Activated T-helper 1 cell treated with anti-CD3 and anti-CD28 coated beads, Interleukin-12 subunit alpha, Interleukin-12 subunit beta, Interleukin-2, Interleukin-4 antibody, amounts not matched to agents 30 ng/mL and 10 ng/mL and 1 ng/mL, durations not matched to agents 14 hours and 24 hours and 36 hours (primary cell): ENCODE measurements at regions of chr9 and their contacts with region 1.

Region 1: DNA sequence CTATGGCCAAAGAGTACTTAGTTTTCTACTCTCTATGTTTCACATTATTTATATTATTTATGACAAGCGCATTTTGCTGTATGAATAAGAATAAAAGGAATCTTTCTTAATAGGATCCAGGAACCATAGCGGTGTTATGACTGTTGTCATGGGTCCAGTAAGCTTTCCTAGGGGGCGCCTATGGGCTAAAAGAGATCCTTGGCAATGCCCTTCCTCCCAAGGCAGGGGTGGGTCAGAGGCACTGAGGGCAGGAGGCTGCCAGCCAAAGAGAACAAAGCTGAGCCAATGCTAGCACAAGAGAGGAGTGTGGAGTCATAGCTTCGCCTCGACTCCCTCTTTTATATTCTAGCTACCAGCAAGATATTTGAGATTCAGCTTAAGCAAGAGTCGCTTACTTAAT is 98.4 kb upstream of the GNAQ start:
- DNase-seq: no peak
- H3K4me3 Mint-ChIP-seq: no peak overlapping the region
- H3K27ac Mint-ChIP-seq: no peak overlapping the region
- H3K4me1 Mint-ChIP-seq: peaks cover 17% of the 10 kb centered on the region
- H3K27me3 Mint-ChIP-seq: peaks cover 8% of the 10 kb centered on the region

Region 2: DNA sequence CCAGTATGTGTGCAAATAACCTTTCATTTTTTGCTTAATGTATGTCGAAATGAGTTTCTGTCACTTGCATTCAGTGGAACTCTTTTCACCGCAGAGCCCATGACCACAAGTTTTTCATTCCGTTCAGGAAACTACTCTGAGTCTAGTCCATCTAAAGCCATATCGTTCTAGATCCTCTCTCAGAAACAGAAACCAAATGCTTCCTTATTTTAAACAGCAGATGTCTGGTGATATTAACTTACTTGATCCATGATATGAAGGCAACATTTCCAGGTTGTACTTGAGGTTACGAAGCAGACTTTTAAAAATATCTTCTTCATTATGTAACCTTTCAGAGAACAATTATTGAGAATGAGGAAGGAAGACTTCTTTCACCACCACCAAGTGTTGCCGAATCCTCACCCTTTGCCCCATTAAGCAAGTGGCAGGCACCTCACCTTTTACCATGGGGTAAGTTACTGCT is 26.0 kb before region 1 on chr9:
- intact Hi-C with region 1: loop called (anchors 1 kb)
- DNase-seq: peak; percentile 45
- H3K4me3 Mint-ChIP-seq: peak overlapping the region; percentile 11
- H3K27ac Mint-ChIP-seq: peak overlapping the region; percentile 25
- H3K4me1 Mint-ChIP-seq: peaks cover 45% of the 10 kb centered on the region
- H3K27me3 Mint-ChIP-seq: peaks cover 2% of the 10 kb centered on the region

Region 3: DNA sequence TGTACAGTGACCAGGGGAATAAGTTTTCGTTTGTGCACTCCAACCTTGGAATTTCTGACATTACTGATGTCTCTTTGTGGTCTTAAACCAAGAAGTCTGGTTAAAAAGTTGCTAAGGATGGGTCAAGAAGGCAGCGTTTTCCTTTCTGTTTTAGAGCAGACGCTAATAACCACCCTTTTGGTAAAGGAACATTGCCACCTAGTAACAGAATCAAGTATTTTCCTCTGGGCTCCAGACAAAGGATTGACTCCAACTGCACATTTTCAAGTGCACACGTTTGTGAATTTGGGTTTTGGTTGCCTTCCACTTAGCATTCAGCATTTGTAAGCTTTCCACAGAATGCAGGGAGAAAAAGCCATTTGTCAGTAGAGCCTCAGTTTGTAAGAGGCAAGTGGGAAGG is 83.7 kb after region 1 on chr9:
- intact Hi-C with region 1: loop called (anchors 5 kb)
- DNase-seq: no peak
- H3K4me3 Mint-ChIP-seq: no peak overlapping the region
- H3K27ac Mint-ChIP-seq: no peak overlapping the region
- H3K4me1 Mint-ChIP-seq: peaks cover 39% of the 10 kb centered on the region
- H3K27me3 Mint-ChIP-seq: peaks cover 2% of the 10 kb centered on the region